Activated B cell treated with CpG ODN at 0.5 μM for 24 hours (primary cell): ENCODE measurements at regions of chr1 and their contacts with region 1.

Region 1: DNA sequence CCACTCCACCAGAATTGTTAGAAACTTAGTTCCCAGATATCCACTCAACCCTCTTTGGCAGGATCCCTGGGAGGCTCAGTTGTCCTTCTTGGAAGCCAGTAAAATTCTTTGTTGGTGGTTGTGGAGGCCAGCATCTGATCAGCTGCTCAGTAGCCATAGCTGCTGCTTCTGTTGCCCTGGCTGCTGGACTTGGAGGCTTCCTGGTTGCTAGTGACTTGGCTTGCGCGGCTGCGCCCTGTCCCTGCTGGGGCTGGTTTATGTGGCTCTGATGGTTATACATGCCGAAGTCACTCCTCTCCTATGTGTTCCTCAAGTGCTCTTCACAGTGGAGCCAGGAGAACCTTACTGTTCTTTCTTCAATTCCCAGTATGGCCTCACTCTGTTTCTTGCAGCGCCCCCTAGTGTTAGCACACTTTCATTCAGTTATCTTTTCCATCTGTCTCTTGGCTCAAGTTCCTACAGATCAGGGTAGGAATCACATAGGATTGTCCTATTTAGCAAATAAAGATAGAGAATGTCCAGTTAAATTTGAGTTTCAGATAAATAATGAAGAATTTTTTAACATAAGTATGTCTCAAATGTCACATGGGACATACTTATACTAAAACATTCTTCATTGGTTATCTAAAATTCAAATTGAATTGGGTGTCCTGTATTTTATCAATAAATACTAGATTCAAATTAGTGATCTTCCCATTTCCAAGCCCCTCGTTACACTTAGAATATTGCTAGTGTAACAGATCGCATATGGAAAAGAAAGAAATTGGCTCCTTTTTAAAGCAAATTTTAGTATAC is 176.4 kb downstream of the TGFB2 start:
- DNase-seq: no peak
- ATAC-seq: no peak
- H3K4me3 Mint-ChIP-seq: no peak overlapping the region
- H3K27ac Mint-ChIP-seq: no peak overlapping the region
- H3K4me1 Mint-ChIP-seq: no peaks in the 10 kb centered on the region
- H3K27me3 Mint-ChIP-seq: peaks cover 8% of the 10 kb centered on the region
- CTCF ChIP-seq: no peak

Region 2: DNA sequence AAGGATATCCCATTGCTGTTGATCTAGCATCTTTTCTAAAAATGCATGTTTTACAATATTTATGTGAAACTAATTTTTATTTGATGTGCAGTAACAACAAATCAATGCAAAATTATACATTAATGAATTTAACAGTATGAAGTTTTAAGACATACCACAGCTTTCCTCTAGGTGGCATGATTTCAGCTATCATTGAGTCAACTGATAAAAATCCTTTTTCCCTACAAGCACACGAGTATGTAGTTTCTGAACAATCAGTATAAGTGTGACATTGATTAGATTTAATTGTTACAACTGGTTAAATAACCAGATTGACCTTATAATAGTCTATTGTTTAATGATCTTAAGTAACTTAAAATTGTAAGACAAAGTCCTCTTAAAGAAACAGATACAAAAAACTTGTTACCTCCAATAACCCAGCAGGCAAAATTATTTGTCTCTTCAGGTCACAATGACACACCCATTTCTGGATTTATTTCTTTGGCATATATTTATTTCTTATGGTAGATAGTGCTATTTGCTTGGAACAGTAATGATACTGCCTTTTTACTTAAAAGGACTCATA is 182.2 kb before region 1 on chr1:
- CTCF ChIA-PET with region 1: interaction called, 27 read pairs
- POLR2A ChIA-PET with region 1: no interaction called
- intact Hi-C with region 1: loop called (anchors 1 kb)
- DNase-seq: no peak
- ATAC-seq: peak; percentile 28
- H3K4me3 Mint-ChIP-seq: no peak overlapping the region
- H3K27ac Mint-ChIP-seq: no peak overlapping the region
- H3K4me1 Mint-ChIP-seq: no peaks in the 10 kb centered on the region
- H3K27me3 Mint-ChIP-seq: no peaks in the 10 kb centered on the region
- CTCF ChIP-seq: peak; percentile 51

Region 3: GRCh38 chr1:218361298-218362065 is 160.1 kb before region 1 on chr1:
- CTCF ChIA-PET with region 1: interaction called, 3 read pairs
- POLR2A ChIA-PET with region 1: no interaction called
- intact Hi-C with region 1: loop called (anchors 1 kb)
- DNase-seq: no peak
- ATAC-seq: no peak
- H3K4me3 Mint-ChIP-seq: no peak overlapping the region
- H3K27ac Mint-ChIP-seq: no peak overlapping the region
- H3K4me1 Mint-ChIP-seq: peaks cover 3% of the 10 kb centered on the region
- H3K27me3 Mint-ChIP-seq: no peaks in the 10 kb centered on the region
- CTCF ChIP-seq: no peak

Region 4: DNA sequence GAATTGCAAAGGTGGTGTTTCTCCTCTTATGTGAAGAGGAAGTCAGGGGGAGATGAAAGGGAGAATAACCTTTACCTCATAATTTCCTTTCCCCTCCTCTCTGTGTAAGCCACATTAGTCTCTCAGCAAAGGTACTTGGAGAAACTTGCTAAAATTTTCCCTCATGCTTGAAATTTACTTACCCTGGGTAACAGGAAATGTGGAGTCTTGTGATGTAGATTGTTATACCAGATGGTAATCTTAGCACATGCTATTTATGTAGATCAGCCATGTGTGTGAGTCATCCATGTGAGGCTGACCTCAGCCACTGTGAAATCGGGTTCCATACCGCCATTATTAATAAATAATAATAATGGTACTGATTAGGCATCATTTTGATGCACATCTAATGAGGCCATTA is 48.0 kb before region 1 on chr1:
- CTCF ChIA-PET with region 1: no interaction called
- POLR2A ChIA-PET with region 1: no interaction called
- intact Hi-C with region 1: loop called (anchors 1 kb)
- DNase-seq: no peak
- ATAC-seq: peak; percentile 74
- H3K4me3 Mint-ChIP-seq: peak overlapping the region; percentile 9
- H3K27ac Mint-ChIP-seq: peak overlapping the region; percentile 83
- H3K4me1 Mint-ChIP-seq: peaks cover 46% of the 10 kb centered on the region
- H3K27me3 Mint-ChIP-seq: no peaks in the 10 kb centered on the region
- CTCF ChIP-seq: no peak

Region 5: DNA sequence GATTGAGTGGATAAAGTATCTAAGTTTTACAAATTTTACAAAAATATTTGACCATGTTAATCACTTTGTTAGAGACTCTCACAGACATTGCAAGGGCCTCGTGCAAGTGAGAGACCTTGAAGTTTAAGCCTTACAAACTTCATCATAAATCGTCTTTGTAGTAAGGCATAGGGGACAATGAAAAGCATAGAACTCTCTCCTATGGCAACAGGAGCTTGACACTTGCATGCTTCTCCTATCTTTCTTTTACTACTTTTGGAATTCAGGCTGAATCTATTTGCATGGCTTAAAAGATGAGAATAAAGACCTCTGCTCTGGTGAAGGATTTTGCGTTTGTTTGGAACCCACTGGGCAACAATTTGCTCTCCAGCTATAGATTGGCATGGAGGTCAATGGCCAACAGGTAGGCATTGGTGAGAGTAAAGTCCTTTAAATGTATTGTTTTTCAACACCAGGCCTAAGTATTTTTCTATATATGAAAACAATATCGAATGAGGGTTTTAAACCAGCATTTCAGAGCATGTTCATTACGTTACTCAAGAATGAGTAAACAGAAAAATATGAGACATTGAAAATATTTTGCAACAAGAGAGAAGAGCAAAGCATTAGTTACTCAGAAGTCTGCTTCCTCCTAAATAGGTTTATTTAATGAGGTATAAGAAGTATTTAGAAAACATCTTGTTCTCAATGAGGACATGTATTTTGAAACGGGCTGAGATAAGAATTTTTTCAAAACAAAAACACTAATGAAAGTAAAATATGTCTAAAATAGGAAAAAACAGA is 15.7 kb after region 1 on chr1:
- CTCF ChIA-PET with region 1: no interaction called
- POLR2A ChIA-PET with region 1: no interaction called
- intact Hi-C with region 1: no loop called
- DNase-seq: no peak
- ATAC-seq: no peak
- H3K4me3 Mint-ChIP-seq: no peak overlapping the region
- H3K27ac Mint-ChIP-seq: no peak overlapping the region
- H3K4me1 Mint-ChIP-seq: no peaks in the 10 kb centered on the region
- H3K27me3 Mint-ChIP-seq: no peaks in the 10 kb centered on the region
- CTCF ChIP-seq: no peak

Region 6: DNA sequence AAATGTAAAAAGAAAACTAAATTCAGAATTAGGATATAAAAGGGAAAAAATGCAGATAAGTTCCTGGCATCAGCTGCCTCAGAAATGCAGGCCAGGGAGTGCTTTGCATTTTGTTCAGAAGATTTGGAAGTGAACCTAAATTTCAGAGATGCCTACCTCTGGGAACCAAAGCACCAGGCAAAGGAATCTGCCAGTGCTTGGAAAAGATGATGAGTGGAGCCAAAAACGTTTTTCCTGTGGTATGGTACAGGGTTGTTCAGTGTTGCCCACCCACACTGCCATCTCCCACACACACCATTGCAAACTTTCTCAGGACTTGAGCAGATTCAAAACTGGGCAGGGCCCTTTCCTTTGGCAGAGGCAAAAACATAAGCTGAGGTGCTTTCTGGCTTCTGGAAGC is 173.1 kb after region 1 on chr1:
- CTCF ChIA-PET with region 1: no interaction called
- POLR2A ChIA-PET with region 1: no interaction called
- intact Hi-C with region 1: no loop called
- DNase-seq: no peak
- ATAC-seq: no peak
- H3K4me3 Mint-ChIP-seq: no peak overlapping the region
- H3K27ac Mint-ChIP-seq: no peak overlapping the region
- H3K4me1 Mint-ChIP-seq: no peaks in the 10 kb centered on the region
- H3K27me3 Mint-ChIP-seq: no peaks in the 10 kb centered on the region
- CTCF ChIP-seq: no peak

Region 7: GRCh38 chr1:219385786-219386427 is 864.3 kb after region 1 on chr1:
- CTCF ChIA-PET with region 1: no interaction called
- POLR2A ChIA-PET with region 1: no interaction called
- intact Hi-C with region 1: loop called (anchors 10 kb)
- DNase-seq: no peak
- ATAC-seq: peak; percentile 52
- H3K4me3 Mint-ChIP-seq: no peak overlapping the region
- H3K27ac Mint-ChIP-seq: no peak overlapping the region
- H3K4me1 Mint-ChIP-seq: no peaks in the 10 kb centered on the region
- H3K27me3 Mint-ChIP-seq: no peaks in the 10 kb centered on the region
- CTCF ChIP-seq: no peak

Region 8: DNA sequence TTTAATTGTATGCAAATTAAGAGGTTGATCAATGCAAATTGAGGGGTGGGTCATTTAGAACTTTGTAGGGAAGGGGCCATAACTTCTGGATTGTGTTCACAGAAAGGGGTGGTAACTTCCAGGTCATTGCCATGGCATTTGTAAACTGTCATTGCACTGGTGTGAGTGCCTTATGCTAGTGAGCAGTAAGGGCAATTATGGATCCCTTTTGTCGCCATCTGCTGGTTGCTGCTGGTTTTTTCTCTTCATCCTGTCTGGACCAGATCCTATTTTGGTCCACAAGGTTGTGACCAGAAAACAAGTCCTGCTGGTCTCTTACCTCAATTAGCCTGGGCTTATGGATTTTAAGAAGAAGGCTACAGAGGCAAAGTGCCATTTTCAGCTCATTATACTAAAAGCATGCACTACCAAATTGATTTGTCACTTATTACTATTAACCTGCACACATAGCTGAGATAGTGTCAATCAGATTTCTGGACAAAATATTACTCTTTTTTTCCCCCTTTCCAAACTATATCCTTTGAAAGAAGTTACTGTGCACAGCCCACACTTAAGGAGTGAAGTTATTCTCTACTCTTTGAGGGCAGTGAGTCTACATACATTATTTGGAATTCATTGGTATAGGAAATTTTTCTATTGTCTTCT is 895.1 kb after region 1 on chr1:
- CTCF ChIA-PET with region 1: no interaction called
- POLR2A ChIA-PET with region 1: no interaction called
- intact Hi-C with region 1: loop called (anchors 10 kb)
- DNase-seq: peak; percentile 28
- ATAC-seq: peak; percentile 65
- H3K4me3 Mint-ChIP-seq: no peak overlapping the region
- H3K27ac Mint-ChIP-seq: no peak overlapping the region
- H3K4me1 Mint-ChIP-seq: no peaks in the 10 kb centered on the region
- H3K27me3 Mint-ChIP-seq: no peaks in the 10 kb centered on the region
- CTCF ChIP-seq: peak; percentile 31

Region 9: GRCh38 chr1:219812491-219813203 is 1291.1 kb after region 1 on chr1:
- CTCF ChIA-PET with region 1: no interaction called
- POLR2A ChIA-PET with region 1: no interaction called
- intact Hi-C with region 1: loop called (anchors 5 kb)
- DNase-seq: no peak
- ATAC-seq: peak; percentile 45
- H3K4me3 Mint-ChIP-seq: no peak overlapping the region
- H3K27ac Mint-ChIP-seq: no peak overlapping the region
- H3K4me1 Mint-ChIP-seq: no peaks in the 10 kb centered on the region
- H3K27me3 Mint-ChIP-seq: peaks cover 10% of the 10 kb centered on the region
- CTCF ChIP-seq: no peak